ENCODE measurements at regions of chr14 and their contacts with region 1.

Region 1: GRCh38 chr14:56885825-56886224 is 75.5 kb upstream of the OTX2 start:
- DNase-seq: no peak
- ATAC-seq: no peak
- H3K4me3 ChIP-seq: no peak overlapping the region
- H3K4me3 Mint-ChIP-seq: no peak overlapping the region
- H3K27ac ChIP-seq: no peak overlapping the region
- H3K27ac Mint-ChIP-seq: no peak overlapping the region
- H3K4me1 ChIP-seq: no peaks in the 10 kb centered on the region
- H3K4me1 Mint-ChIP-seq: no peaks in the 10 kb centered on the region
- H3K27me3 ChIP-seq: peaks cover 0 to 7% of the 10 kb centered on the region in 2 experiments
- H3K27me3 Mint-ChIP-seq: peaks cover 19 to 36% of the 10 kb centered on the region in 2 donors

Region 2: GRCh38 chr14:56918849-56919574 is 33.2 kb after region 1 on chr14:
- CTCF ChIA-PET with region 1: no interaction called
- POLR2A ChIA-PET with region 1: no interaction called
- DNase-seq: no peak
- ATAC-seq: no peak
- H3K4me3 ChIP-seq: no peak overlapping the region
- H3K4me3 Mint-ChIP-seq: no peak overlapping the region
- H3K27ac ChIP-seq: no peak overlapping the region
- H3K27ac Mint-ChIP-seq: no peak overlapping the region
- H3K4me1 ChIP-seq: no peaks in the 10 kb centered on the region
- H3K4me1 Mint-ChIP-seq: no peaks in the 10 kb centered on the region
- H3K27me3 ChIP-seq: peaks cover 0 to 7% of the 10 kb centered on the region in 2 experiments
- H3K27me3 Mint-ChIP-seq: peaks cover 0 to 6% of the 10 kb centered on the region in 2 donors

Region 3: DNA sequence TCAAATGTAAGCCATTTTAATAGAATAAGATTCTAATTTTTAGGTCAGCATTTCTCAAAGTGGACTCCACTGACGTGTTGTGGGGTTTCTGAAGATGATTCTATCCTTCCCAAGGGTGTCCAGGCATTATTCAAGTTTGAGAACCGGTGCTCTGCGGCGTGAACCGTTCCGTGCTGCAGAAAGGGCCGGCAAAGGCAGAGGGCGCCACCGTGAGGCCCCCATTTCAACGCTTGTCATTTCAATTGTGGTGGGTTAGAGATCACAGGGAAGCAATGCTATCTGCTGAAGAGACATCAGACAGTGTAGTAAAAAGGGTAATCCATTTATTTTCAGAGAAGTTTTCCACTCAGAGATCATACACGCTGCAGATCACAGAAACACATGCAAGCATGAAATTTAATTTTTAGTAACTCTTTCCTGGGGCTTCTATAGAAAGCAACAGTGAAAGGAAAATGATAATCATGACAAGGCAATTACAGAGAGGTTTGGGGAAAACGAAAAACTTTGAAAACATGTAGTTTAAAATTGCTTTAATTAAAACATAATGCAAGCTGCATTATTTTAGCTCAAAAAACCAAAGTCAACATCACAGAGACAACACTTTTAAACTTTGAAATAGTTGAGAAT is 181.2 kb after region 1 on chr14:
- CTCF ChIA-PET with region 1: no interaction called
- POLR2A ChIA-PET with region 1: no interaction called
- DNase-seq: peak in 5 of 35 experiments; percentile 1 to 11 (median 2)
- ATAC-seq: no peak
- H3K4me3 ChIP-seq: no peak overlapping the region
- H3K4me3 Mint-ChIP-seq: no peak overlapping the region
- H3K27ac ChIP-seq: no peak overlapping the region
- H3K27ac Mint-ChIP-seq: no peak overlapping the region
- H3K4me1 ChIP-seq: no peaks in the 10 kb centered on the region
- H3K4me1 Mint-ChIP-seq: peaks cover 0 to 3% (median 3%) of the 10 kb centered on the region in 3 donors
- H3K27me3 ChIP-seq: peaks cover 3 to 7% of the 10 kb centered on the region in 2 experiments
- H3K27me3 Mint-ChIP-seq: peaks cover 15 to 40% of the 10 kb centered on the region in 2 donors

Region 4: GRCh38 chr14:57089901-57090300 is 204.1 kb after region 1 on chr14:
- CTCF ChIA-PET with region 1: interaction called in 1 of 2 experiments, 10 read pairs
- POLR2A ChIA-PET with region 1: no interaction called
- DNase-seq: no peak
- ATAC-seq: no peak
- H3K4me3 ChIP-seq: no peak overlapping the region
- H3K4me3 Mint-ChIP-seq: no peak overlapping the region
- H3K27ac ChIP-seq: no peak overlapping the region
- H3K27ac Mint-ChIP-seq: no peak overlapping the region
- H3K4me1 ChIP-seq: no peaks in the 10 kb centered on the region
- H3K4me1 Mint-ChIP-seq: no peaks in the 10 kb centered on the region
- H3K27me3 ChIP-seq: peaks cover 0 to 2% of the 10 kb centered on the region in 2 experiments
- H3K27me3 Mint-ChIP-seq: peaks cover 4 to 9% of the 10 kb centered on the region in 2 donors

Region 5: DNA sequence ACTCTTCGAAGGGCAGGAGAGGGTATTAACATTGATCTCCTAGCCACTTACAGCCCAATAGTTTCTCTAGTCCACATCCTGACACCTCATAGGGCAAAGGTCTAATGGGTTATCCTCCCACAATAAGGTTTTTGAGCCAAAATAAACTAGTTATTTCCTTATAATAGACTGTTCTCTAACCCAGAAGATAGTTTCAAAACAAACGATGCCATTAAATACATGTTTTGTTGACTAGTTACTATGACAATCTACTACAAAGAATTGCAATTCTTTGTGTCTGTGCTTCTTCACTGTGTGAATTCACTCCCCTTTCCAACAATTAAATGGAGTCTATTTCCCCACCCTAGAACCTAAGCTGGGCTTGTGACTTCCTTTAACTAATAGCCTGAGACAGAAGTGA is 1307.7 kb after region 1 on chr14:
- CTCF ChIA-PET with region 1: no interaction called
- POLR2A ChIA-PET with region 1: no interaction called
- DNase-seq: no peak
- ATAC-seq: no peak
- H3K4me3 ChIP-seq: no peak overlapping the region
- H3K4me3 Mint-ChIP-seq: no peak overlapping the region
- H3K27ac ChIP-seq: no peak overlapping the region
- H3K27ac Mint-ChIP-seq: no peak overlapping the region
- H3K4me1 ChIP-seq: peaks cover 0 to 7% of the 10 kb centered on the region in 2 experiments
- H3K4me1 Mint-ChIP-seq: peaks cover 6 to 17% (median 12%) of the 10 kb centered on the region in 3 donors
- H3K27me3 ChIP-seq: no peaks in the 10 kb centered on the region
- H3K27me3 Mint-ChIP-seq: peaks cover 6 to 8% of the 10 kb centered on the region in 2 donors

Measured in T-cell (primary cell).